ENCODE measurements at regions of chr12 and their contacts with region 1.

Region 1: DNA sequence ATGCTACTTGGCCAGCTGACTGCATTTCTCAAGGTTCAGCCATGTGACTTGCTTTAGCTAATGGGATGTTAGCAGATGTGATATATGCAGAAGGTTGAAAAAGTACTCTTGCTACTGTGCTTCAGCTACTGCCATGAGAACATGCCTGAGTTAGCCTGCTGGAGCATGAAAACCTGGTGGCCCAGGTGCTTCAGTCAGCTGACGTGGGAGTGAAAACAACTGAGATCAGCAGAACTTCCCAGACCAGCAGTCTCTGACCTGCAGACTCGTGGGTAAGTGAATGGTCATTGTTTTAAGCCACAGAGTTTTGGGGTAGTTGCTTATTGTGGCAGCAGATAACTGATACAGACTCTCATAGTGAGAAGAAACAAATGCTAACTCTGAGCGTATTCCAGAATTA is 118.6 kb upstream of the GRIN2B start:
- DNase-seq: no peak
- H3K4me3 ChIP-seq: no peak overlapping the region
- H3K27ac ChIP-seq: no peak overlapping the region
- H3K4me1 ChIP-seq: no peaks in the 10 kb centered on the region
- H3K27me3 ChIP-seq: no peaks in the 10 kb centered on the region
- CTCF ChIP-seq: no peak
- POLR2A ChIP-seq: no peak

Region 2: GRCh38 chr12:14129611-14130195 is 29.7 kb after region 1 on chr12:
- intact Hi-C with region 1: no loop called
- DNase-seq: no peak
- H3K4me3 ChIP-seq: no peak overlapping the region
- H3K27ac ChIP-seq: no peak overlapping the region
- H3K4me1 ChIP-seq: no peaks in the 10 kb centered on the region
- H3K27me3 ChIP-seq: no peaks in the 10 kb centered on the region
- CTCF ChIP-seq: no peak
- POLR2A ChIP-seq: no peak

Region 3: DNA sequence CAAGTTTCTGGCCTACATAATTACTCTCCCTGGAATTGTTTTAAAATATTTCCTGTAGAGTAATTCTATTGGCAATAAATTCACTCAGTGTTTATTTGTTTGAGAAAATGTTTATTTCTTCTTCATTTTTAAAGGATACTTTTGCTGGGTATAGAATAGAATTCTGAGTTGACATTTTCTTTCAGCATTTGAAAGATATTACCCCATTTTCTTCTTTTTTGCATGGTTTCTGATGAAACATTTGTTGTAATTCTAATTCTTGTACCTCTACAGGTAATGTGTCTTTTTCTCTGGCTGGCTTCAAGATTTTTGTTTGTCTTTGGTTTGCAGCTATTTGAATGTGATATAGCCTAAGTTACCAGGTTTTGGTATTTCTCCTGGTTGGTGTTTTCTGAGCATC is 240.4 kb after region 1 on chr12:
- intact Hi-C with region 1: loop called (anchors 5 kb)
- DNase-seq: no peak
- H3K4me3 ChIP-seq: no peak overlapping the region
- H3K27ac ChIP-seq: no peak overlapping the region
- H3K4me1 ChIP-seq: no peaks in the 10 kb centered on the region
- H3K27me3 ChIP-seq: no peaks in the 10 kb centered on the region
- CTCF ChIP-seq: no peak
- POLR2A ChIP-seq: no peak